Cardiac septum (tissue), 1 donor: ENCODE measurements at regions of chr12 and their contacts with region 1.

Region 1: GRCh38 chr12:124036674-124037109 is 63.7 kb downstream of the ZNF664 start:
- DNase-seq: no peak

Region 2: DNA sequence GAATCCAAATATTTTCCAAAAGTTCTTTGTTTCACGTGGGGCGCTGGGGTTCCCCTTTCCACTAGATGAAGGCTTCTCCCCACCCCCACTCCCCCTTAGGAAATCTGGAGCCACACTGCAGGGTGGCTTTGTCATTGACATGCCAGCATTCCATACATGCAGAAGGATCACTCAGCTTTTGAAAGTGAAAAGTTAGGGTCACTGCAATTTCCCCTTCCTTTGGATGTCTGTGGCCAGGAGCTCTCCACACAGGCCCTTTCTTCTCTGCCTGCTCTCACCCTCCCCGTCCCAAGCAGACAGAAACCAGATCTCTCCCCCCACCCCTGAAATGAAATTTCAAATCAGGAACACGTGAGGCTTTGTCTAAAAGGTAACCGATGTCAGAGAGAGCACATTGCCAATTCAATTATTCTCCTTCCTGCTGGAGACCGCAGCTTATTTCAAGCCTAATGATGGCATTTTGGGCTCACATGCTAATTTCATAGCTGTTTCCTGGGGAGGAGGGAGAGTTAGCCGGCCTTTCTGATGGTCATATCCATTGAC is 104.3 kb after region 1 on chr12:
- intact Hi-C with region 1: no loop called
- DNase-seq: no peak

Region 3: DNA sequence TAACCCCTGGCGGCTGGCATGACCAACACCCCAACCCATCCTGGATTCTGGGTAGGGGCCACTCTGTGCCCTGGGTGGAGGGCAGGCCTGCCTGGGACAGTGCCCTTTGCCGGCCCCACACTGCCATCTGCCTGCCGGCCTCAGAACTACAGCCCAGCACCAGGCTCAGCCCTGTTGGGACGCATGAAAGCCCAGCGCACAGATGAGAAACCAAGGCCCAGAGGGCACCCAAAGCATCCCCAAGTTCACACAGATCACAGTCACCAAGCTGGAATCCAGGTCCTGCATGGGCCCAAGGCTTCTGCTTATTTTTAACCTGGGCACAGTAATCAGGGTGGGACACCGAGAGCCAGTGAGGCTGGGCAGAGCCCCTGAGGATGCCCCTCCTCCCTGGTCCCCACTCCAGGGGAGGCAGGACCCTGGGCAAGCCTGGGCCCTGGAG is 284.4 kb after region 1 on chr12:
- intact Hi-C with region 1: loop called (anchors 5 kb)
- DNase-seq: peak; percentile 85

Region 4: DNA sequence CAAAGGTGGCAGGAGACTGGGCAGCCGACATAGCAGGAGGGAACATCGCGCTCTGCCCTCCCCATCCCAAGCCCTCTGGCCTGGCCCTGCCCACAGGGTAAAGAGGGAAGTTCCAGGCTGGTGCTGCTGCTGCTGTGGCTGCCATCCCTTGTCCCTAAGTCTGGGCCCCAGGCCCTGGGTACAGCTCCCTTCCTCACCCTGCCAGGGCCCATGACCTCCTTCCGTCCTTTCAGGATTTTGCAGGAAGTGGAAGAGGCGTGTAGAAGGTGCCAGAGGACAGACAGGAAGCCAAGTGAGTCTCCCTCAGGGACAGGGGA is 545.4 kb after region 1 on chr12:
- intact Hi-C with region 1: loop called (anchors 10 kb)
- DNase-seq: no peak

Region 5: GRCh38 chr12:124906606-124907261 is 870.0 kb after region 1 on chr12:
- intact Hi-C with region 1: loop called (anchors 10 kb)
- DNase-seq: peak; percentile 87